Heart right ventricle (tissue), 16 donors: ENCODE measurements at regions of chr7 and their contacts with region 1.

Region 1: DNA sequence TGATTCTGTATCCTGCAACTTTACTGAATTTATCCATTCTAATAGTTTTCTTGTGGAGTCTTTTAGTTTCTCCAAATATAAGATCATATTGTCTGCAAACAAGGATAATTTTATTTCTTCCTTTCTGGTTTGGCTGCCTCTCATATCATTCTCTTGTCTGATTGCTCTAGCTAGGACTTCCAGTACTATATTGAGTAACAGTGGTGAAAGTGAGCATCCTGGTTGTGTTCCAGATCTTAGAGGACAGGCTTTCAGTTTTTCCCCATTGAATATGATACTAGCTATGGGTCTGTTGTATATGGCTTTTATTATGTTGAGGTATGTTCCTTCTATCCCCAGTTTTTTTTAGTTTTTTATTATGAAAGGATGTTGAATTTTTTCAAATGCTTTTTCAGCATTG is 28.2 kb downstream of the KLHL7 start:
- DNase-seq: no peak
- ATAC-seq: peak in 1 of 8 donors; percentile 41
- H3K4me3 ChIP-seq: no peak overlapping the region
- H3K27ac ChIP-seq: peak overlapping the region in 4 of 10 donors; percentile 5 to 41 (median 24)
- H3K4me1 ChIP-seq: peaks cover 0 to 30% (median 11%) of the 10 kb centered on the region in 9 donors
- H3K27me3 ChIP-seq: no peaks in the 10 kb centered on the region
- CTCF ChIP-seq: no peak

Region 2: DNA sequence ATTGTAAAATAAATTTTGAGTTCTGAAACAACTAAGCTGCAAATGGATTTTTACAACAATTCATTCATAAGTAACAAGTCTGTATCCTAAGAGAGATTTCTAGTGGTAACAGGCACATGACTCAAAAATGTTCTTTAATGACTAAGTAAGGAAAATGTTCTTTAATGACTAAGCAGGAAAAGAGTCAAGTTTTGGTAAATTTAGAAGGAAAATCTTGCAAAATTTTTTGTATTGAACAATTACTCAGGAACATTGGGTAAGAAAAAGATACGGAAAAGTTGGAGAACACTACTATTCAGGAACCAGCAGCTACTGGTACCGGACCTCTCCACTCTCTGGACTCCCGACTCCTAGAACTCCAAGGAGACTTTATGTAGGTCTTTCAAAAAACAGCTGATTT is 153.4 kb before region 1 on chr7:
- intact Hi-C with region 1: no loop called
- DNase-seq: no peak
- ATAC-seq: peak in 1 of 8 donors; percentile 62
- H3K4me3 ChIP-seq: no peak overlapping the region
- H3K27ac ChIP-seq: peak overlapping the region in 1 of 10 donors; percentile 10
- H3K4me1 ChIP-seq: peaks cover 0 to 11% (median 0%) of the 10 kb centered on the region in 9 donors
- H3K27me3 ChIP-seq: no peaks in the 10 kb centered on the region
- CTCF ChIP-seq: no peak

Region 3: DNA sequence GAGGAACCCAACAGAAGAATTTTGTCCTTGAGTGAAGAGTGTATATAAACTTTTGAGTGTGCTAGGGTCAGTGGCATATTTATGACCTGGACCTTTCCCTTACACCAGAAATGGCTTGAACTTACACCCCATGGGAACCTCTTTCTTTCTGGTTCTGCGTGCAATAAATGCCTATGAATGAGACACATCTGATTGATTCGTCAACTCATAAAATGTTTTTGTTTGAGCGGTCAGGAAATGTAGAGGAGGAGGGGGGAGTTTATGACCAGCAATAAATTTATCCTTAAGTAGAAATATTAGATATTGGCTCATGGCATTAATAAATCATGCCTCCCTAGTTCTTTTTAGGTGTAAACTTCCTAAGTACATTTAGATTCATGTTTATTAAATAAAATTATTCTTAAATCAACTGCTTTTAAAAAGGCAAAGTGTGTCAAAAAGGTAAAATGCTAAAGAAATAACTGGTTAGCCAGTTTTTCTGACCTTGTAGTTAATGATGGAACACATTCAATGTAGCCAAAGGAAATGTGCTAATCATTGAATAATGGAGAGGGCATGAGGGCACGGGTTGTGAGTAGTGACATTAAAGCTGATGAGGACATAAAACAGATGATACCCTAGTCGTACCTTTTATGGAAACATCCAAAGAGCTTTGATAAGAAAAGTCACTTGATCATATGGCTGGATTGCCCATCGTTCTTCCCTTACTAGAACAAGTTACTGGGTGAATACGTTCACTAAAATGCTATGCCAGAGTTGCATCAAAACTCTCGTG is 34.5 kb after region 1 on chr7:
- intact Hi-C with region 1: loop called in 2 of 10 experiments (anchors 5 kb)
- DNase-seq: no peak
- ATAC-seq: peak in 7 of 8 donors; percentile 67 to 90 (median 81)
- H3K4me3 ChIP-seq: no peak overlapping the region
- H3K27ac ChIP-seq: peak overlapping the region in 8 of 10 donors; percentile 31 to 75 (median 66)
- H3K4me1 ChIP-seq: peaks cover 0 to 18% (median 0%) of the 10 kb centered on the region in 9 donors
- H3K27me3 ChIP-seq: no peaks in the 10 kb centered on the region
- CTCF ChIP-seq: no peak

Region 4: GRCh38 chr7:23175938-23176337 is 42.1 kb after region 1 on chr7:
- intact Hi-C with region 1: loop called in 1 of 10 experiments (anchors 5 kb)
- DNase-seq: no peak
- ATAC-seq: peak in 1 of 8 donors; percentile 42
- H3K4me3 ChIP-seq: no peak overlapping the region
- H3K27ac ChIP-seq: no peak overlapping the region
- H3K4me1 ChIP-seq: peaks cover 0 to 4% (median 0%) of the 10 kb centered on the region in 9 donors
- H3K27me3 ChIP-seq: no peaks in the 10 kb centered on the region
- CTCF ChIP-seq: no peak